Aorta (tissue), 5 donors: ENCODE measurements at regions of chr2 and their contacts with region 1.

Region 1: DNA sequence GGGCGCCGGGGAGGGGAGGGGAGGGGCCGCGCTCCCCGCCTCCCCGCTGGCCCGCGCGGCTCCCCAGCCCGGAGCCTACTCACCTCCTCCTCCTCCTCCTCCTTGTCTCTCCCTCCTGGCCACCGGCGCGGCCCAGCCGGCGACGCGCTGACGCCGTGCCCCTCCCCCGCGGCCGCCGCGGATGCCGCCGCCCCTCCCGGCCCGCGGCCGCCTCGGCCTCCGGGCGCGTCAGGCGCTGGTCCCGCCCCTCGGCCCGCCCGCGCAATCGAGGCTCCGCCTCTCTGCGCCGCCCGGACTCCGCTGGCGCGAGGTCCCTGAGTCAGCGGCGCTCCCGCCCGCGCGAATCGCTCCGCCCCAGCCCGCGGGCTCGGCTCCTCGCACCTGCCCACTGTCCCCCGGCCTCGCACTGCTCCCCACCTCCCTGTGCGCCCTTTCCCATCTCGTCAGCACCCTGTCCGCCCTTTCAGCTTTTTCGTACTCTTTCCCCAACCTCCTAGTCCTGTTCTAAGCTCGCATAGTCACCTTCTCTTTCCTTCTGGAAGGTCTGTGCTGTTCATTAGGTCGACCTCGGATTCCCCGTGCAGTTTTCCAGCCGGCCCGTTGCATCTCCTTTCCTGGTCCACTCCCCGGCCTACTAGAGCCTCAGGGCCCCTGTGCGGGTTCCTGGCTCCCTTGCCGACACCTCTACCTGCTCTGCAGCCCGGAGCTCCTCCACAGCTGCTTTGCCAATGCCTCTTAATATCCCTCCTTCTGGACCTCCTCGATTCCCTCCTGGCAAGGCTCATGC is 187.4 kb downstream of the ZEB2 start:
- DNase-seq: peak; percentile 89 to 95
- ATAC-seq: peak; percentile 96
- H3K4me3 ChIP-seq: peak overlapping the region; percentile 69 to 77
- H3K27ac ChIP-seq: peak overlapping the region in 1 of 2 donors; percentile 39
- H3K4me1 ChIP-seq: no peaks in the 10 kb centered on the region
- H3K27me3 ChIP-seq: no peaks in the 10 kb centered on the region

Region 2: GRCh38 chr2:144382849-144383248 is 50.3 kb after region 1 on chr2:
- intact Hi-C with region 1: loop called in 1 of 2 experiments (anchors 10 kb)
- DNase-seq: no peak
- ATAC-seq: peak; percentile 57
- H3K4me3 ChIP-seq: no peak overlapping the region
- H3K27ac ChIP-seq: no peak overlapping the region
- H3K4me1 ChIP-seq: peaks cover 2 to 7% of the 10 kb centered on the region in 2 donors
- H3K27me3 ChIP-seq: no peaks in the 10 kb centered on the region

Region 3: DNA sequence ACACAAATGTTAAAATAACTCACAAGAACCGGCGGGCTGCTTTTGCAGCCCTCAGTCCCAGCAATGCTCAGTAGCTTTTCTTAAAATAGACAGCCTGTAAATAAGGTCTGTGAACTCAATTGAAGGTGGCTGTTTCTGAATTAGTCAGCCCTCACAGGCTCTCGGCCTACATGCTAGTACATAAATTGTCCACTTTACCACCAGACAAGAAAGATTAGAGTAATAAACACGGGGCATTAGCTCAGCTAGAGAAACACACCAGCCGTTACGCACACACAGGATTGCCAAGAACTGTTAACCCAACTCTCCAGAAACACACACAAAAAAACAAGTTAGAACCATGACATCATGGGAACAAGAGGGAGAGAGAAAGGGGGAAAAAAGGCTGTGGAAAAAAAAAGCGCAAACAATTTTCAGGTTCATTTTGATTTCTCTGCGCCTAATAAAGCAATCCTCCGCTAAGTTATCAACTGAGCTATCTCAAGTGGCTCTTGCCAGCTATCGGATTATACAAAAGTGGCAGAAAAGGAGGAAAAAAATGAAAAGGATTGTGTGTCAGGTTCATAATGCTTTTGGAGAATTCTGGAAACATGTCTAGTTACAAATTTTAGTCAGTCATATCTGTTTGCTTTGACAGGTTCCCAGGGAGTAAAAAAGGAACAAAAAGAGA is 98.3 kb after region 1 on chr2:
- intact Hi-C with region 1: loop called (anchors 5 to 10 kb)
- DNase-seq: peak in 1 of 2 donors; percentile 53
- ATAC-seq: peak; percentile 88
- H3K4me3 ChIP-seq: peak overlapping the region; percentile 18 to 90
- H3K27ac ChIP-seq: peak overlapping the region; percentile 71 to 97
- H3K4me1 ChIP-seq: peaks cover 4% of the 10 kb centered on the region in 2 donors
- H3K27me3 ChIP-seq: no peaks in the 10 kb centered on the region